ENCODE measurements at regions of chr2 and their contacts with region 1.

Region 1: GRCh38 chr2:241096979-241097378 is 5.1 kb downstream of the MTERF4 start:
- DNase-seq: no peak
- ATAC-seq: peak; percentile 66
- H3K4me3 Mint-ChIP-seq: no peak overlapping the region
- H3K27ac Mint-ChIP-seq: peak overlapping the region; percentile 75
- H3K4me1 Mint-ChIP-seq: peaks cover 65% of the 10 kb centered on the region
- H3K27me3 Mint-ChIP-seq: no peaks in the 10 kb centered on the region

Region 2: DNA sequence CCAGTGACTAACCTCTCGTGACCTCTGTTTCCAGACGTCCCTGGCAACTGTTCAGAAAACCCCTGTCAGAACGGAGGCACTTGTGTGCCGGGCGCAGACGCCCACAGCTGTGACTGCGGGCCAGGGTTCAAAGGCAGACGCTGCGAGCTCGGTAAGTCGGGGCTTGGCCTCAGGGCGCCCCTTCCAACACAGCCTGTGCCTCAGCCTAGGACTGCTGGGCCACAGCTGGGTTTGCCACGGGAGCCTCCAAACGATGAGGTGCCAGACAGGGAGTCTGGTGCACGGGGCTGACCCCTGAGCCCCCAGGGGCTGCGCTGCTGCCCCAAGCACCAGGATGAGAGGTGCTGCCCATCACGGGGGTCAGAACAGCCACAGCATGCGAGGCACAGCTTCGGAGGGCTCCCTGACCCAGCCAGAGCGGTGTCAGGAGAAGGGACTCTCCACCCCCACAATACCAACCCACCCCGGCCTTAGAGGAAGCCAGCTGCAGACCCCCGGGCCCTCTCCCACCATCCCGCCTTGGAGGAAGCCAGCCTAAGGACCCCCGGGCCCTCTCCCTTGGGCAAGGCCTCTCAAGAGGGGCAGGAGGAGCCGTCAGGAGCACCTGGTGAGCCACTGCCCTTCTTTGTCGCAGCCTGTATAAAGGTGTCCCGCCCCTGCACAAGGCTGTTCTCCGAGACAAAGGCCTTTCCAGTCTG is 15.2 kb before region 1 on chr2:
- CTCF ChIA-PET with region 1: interaction called, 18 read pairs
- POLR2A ChIA-PET with region 1: interaction called, 3 read pairs
- intact Hi-C with region 1: loop called in 1 of 2 experiments (anchors 2 kb)
- DNase-seq: no peak
- ATAC-seq: no peak
- H3K4me3 Mint-ChIP-seq: no peak overlapping the region
- H3K27ac Mint-ChIP-seq: no peak overlapping the region
- H3K4me1 Mint-ChIP-seq: no peaks in the 10 kb centered on the region
- H3K27me3 Mint-ChIP-seq: no peaks in the 10 kb centered on the region